ENCODE measurements at regions of chr11 and their contacts with region 1.

Region 1: DNA sequence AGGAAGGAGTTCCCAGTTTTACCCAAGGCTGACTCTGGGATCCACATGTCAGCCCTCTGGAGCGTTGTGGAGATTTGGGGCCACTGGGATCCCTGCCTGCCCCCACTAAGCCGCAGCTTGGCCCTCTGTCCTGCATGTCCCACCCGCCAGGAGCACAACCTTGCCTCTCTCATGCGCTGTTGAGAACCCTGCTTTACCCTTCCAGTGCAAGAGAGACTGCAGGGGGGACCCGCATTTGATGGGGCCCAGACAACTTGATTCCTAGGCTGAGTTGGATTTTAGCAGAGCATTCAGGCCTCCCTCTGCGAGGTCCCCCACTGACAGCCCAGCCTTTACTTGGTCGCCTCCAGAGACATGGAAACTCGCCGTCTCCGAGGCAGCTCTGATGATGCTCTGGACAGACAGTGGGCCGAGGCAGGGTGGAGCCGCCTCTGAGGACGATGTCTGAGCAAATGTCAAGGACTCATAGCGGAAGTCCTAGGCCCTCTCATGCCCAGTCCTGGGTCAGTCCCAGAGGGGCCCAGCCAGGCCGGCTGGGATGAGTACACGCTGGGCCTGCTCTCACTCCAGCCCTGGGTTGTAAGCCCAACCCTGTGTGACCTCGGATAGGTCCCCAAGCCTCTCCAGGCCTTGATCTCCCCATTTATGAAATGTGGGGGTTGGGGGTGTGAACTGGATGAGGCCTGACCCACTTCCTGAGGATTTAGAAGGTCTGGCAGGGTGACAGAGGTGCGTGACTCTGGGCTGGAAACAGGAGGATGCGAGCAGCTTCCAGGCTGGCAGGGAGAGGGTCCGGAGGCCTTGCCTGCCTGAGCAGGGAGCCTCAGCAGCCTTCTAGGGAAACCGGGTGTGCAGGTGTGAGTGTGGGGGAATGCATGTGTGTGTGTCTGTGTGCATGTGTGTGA is 630 bp downstream of the CD5 start:
- DNase-seq: peak in 4 of 14 experiments; percentile 47 to 78 (median 55)
- ATAC-seq: peak; percentile 22
- H3K4me3 ChIP-seq: peak overlapping the region; percentile 100
- H3K4me3 Mint-ChIP-seq: no peak overlapping the region
- H3K27ac ChIP-seq: peak overlapping the region; percentile 95 to 96
- H3K27ac Mint-ChIP-seq: no peak overlapping the region
- H3K4me1 ChIP-seq: peaks cover 58% of the 10 kb centered on the region
- H3K4me1 Mint-ChIP-seq: peaks cover 45% of the 10 kb centered on the region
- H3K27me3 ChIP-seq: no peaks in the 10 kb centered on the region
- H3K27me3 Mint-ChIP-seq: no peaks in the 10 kb centered on the region
- CTCF ChIP-seq: no peak

Region 2: DNA sequence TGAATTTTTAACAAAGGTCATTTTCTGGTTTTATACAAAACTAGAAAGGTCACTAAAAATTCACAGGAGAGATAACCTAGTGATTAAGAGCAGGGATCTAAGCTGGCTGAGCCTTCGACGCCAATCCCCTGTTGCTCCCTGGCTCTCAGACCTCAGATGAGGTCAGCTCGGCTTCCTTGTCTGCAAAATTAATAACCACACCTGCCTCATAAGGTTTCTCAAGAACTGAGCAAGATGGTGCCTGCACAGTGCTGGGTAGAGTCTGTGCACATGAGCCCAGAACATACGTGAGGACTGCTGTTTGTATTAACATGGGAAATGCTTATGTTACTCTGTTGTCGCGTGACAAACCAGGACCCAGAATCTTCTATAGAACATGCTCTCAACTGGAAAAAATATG is 25.0 kb before region 1 on chr11:
- CTCF ChIA-PET with region 1: interaction called, 4 read pairs
- POLR2A ChIA-PET with region 1: interaction called, 48 read pairs
- intact Hi-C with region 1: loop called in 1 of 2 experiments (anchors 2 kb)
- DNase-seq: peak in 2 of 14 experiments; percentile 10 to 59
- ATAC-seq: no peak
- H3K4me3 ChIP-seq: no peak overlapping the region
- H3K4me3 Mint-ChIP-seq: peak overlapping the region; percentile 62
- H3K27ac ChIP-seq: peak overlapping the region; percentile 39 to 47
- H3K27ac Mint-ChIP-seq: peak overlapping the region; percentile 98
- H3K4me1 ChIP-seq: peaks cover 71% of the 10 kb centered on the region
- H3K4me1 Mint-ChIP-seq: peaks cover 95% of the 10 kb centered on the region
- H3K27me3 ChIP-seq: no peaks in the 10 kb centered on the region
- H3K27me3 Mint-ChIP-seq: no peaks in the 10 kb centered on the region
- CTCF ChIP-seq: no peak

Region 3: DNA sequence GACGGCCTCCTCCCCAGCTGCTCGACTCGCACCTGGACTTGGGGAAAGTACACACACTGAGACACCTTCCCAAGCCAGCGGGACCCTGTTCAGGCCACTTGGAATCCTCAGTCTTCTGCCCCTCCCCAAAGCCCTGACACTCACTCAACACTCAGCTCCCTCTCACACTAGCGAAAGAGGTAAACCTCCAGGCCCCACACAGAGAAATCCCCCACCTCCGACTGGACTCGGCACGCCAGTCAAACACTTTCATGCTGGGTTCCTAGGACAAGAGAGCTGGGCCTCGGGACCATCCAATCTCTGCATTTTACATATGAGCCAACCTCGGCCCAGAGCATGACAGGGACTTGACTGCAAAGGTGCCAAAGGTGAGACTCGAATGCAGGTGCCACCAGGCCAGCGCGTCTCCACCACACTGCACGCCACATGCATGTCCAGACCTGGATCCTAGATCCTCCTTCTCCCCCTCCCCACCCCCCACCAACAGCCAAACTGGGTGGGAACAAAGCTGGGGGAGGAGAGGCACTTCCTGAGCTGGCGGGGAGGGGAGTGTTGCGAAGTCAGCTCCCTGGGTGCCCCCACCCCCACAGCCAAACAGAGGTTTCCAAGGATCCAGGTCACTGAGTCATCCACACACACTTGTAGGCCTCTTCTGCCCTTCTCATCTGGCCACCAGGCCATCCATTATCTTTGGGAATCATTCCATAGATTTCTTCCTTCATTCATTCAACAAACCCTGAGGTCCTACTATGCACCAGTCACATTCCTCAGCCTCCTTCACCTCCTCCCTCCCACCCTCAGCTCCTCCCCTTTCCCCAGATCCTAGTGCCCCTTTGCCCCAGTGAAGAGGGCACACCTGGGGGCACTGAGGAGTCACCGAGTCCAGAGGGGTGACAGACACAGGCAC is 11.3 kb before region 1 on chr11:
- CTCF ChIA-PET with region 1: interaction called, 3 read pairs
- POLR2A ChIA-PET with region 1: interaction called, 17 read pairs
- intact Hi-C with region 1: no loop called
- DNase-seq: peak in 6 of 14 experiments; percentile 43 to 74 (median 58)
- ATAC-seq: peak; percentile 52
- H3K4me3 ChIP-seq: peak overlapping the region; percentile 28
- H3K4me3 Mint-ChIP-seq: peak overlapping the region; percentile 81
- H3K27ac ChIP-seq: peak overlapping the region; percentile 59 to 82
- H3K27ac Mint-ChIP-seq: peak overlapping the region; percentile 93
- H3K4me1 ChIP-seq: peaks cover 50% of the 10 kb centered on the region
- H3K4me1 Mint-ChIP-seq: peaks cover 66% of the 10 kb centered on the region
- H3K27me3 ChIP-seq: no peaks in the 10 kb centered on the region
- H3K27me3 Mint-ChIP-seq: no peaks in the 10 kb centered on the region
- CTCF ChIP-seq: no peak

Region 4: GRCh38 chr11:61120706-61121191 is 17.8 kb after region 1 on chr11:
- CTCF ChIA-PET with region 1: no interaction called
- POLR2A ChIA-PET with region 1: interaction called, 22 read pairs
- intact Hi-C with region 1: loop called in 1 of 2 experiments (anchors 2 kb)
- DNase-seq: peak; percentile 43 to 92 (median 52)
- ATAC-seq: peak; percentile 86
- H3K4me3 ChIP-seq: no peak overlapping the region
- H3K4me3 Mint-ChIP-seq: peak overlapping the region; percentile 87
- H3K27ac ChIP-seq: peak overlapping the region; percentile 64 to 74
- H3K27ac Mint-ChIP-seq: peak overlapping the region; percentile 95
- H3K4me1 ChIP-seq: peaks cover 67% of the 10 kb centered on the region
- H3K4me1 Mint-ChIP-seq: peaks cover 72% of the 10 kb centered on the region
- H3K27me3 ChIP-seq: no peaks in the 10 kb centered on the region
- H3K27me3 Mint-ChIP-seq: no peaks in the 10 kb centered on the region
- CTCF ChIP-seq: no peak

Region 5: DNA sequence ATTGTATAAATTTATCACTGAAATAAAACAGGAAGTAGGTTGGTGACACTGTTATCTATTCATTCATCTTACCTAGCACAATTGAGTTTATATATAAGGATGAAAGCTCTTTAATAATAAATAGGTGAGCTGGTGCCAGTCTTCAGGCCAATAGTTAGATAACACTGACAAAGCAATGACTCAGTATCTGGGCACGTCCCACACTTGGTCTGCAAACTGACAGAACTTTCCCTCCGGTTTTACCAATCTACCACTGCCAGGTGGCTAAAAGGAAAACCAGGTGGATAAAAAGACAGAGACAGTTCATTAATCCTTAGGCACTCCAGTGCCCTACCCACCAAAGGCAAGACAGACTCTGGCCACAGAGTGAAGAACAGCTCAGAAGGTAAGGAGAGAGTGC is 212.3 kb after region 1 on chr11:
- CTCF ChIA-PET with region 1: no interaction called
- POLR2A ChIA-PET with region 1: no interaction called
- intact Hi-C with region 1: no loop called
- DNase-seq: no peak
- ATAC-seq: no peak
- H3K4me3 ChIP-seq: no peak overlapping the region
- H3K4me3 Mint-ChIP-seq: no peak overlapping the region
- H3K27ac ChIP-seq: no peak overlapping the region
- H3K27ac Mint-ChIP-seq: no peak overlapping the region
- H3K4me1 ChIP-seq: no peaks in the 10 kb centered on the region
- H3K4me1 Mint-ChIP-seq: no peaks in the 10 kb centered on the region
- H3K27me3 ChIP-seq: no peaks in the 10 kb centered on the region
- H3K27me3 Mint-ChIP-seq: no peaks in the 10 kb centered on the region
- CTCF ChIP-seq: no peak

Measured in CD4-positive, alpha-beta T cell (primary cell).